Naive thymus-derived CD4-positive, alpha-beta T cell (primary cell): ENCODE measurements at regions of chr7 and their contacts with region 1.

Region 1: DNA sequence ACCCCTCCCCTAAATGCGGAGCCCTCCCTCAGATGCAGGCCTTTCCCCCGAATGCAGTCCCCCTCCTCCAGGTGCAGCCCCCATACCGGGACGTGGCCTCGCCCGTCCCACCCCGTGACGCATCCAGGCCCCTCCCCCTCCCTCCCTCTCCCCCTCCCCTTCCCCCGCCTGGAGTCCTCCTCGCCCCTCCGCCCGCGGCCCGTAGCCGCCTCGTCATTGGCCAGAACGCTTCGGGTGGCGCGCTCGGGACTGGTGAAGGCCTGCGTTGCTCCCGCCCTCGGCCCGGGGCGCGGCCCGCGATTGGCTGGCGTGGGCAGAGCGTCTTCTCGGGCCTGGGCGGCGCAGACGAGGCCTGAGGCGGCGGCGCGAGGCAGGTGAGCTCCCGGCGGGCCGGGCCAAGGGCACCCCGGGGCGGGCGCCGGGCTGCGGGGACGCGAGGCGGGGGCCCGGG is 16.0 kb upstream of the SUN1 start:
- DNase-seq: peak; percentile 95 to 98 (median 97)
- ATAC-seq: peak; percentile 98
- H3K4me3 ChIP-seq: peak overlapping the region; percentile 52
- H3K4me3 Mint-ChIP-seq: peak overlapping the region; percentile 60 to 98 (median 88)
- H3K27ac ChIP-seq: peak overlapping the region; percentile 59
- H3K27ac Mint-ChIP-seq: peak overlapping the region in 3 of 9 donors; percentile 9 to 85 (median 65)
- H3K4me1 ChIP-seq: peaks cover 27 to 32% of the 10 kb centered on the region in 2 donors
- H3K4me1 Mint-ChIP-seq: peaks cover 45 to 72% (median 61%) of the 10 kb centered on the region in 7 donors
- H3K27me3 ChIP-seq: no peaks in the 10 kb centered on the region
- H3K27me3 Mint-ChIP-seq: peaks cover 0 to 42% (median 0%) of the 10 kb centered on the region in 5 donors

Region 2: DNA sequence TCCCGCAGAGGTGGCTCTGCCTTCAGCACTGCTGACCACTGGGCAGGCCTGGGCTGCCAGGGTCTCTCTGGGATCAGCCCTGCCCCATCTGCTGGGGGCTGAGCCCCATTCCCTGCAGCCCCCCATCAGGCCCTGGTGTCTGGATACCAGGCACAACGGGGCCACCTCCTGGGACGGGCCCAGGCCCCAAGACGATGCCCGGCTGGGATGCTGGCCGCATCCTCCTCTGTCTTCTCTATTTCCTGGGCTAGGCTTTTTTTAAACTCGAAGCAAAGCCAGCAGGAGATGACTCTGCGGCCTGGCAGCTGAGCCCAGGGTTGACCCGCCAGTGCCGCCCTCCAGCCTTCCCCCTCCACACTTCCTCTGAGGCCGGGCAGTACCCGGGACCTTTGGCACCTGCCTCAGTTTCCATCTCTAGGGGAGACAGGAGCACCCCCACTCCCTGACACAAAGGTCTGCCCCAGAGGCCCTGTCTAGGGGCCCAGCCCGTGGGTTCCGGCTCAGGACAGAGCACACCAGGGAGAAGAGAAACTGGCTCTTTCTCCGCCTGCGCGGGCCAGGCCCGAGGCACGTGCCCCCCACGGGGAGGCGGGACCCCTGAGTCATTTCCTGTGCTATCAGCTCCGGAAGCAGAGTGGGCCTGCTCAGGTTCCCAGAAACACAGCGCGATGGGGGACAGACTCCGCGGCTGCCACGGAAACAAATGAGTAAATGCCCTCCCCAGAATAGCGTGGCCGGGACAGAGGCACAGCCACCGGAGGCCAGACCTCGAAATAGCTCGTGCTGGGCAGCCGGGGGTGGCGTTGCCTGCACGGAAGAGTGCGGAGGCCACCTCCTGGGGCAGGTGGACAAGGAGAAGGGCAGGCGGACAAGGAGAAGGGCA is 212.1 kb before region 1 on chr7:
- CTCF ChIA-PET with region 1: no interaction called
- POLR2A ChIA-PET with region 1: no interaction called
- intact Hi-C with region 1: loop called in 1 of 2 experiments (anchors 5 kb)
- DNase-seq: peak; percentile 74 to 91 (median 87)
- ATAC-seq: peak; percentile 89
- H3K4me3 ChIP-seq: peak overlapping the region; percentile 26
- H3K4me3 Mint-ChIP-seq: peak overlapping the region; percentile 77 to 98 (median 88)
- H3K27ac ChIP-seq: peak overlapping the region; percentile 86
- H3K27ac Mint-ChIP-seq: peak overlapping the region; percentile 93 to 100 (median 99)
- H3K4me1 ChIP-seq: peaks cover 48 to 56% of the 10 kb centered on the region in 2 donors
- H3K4me1 Mint-ChIP-seq: peaks cover 37 to 72% (median 49%) of the 10 kb centered on the region in 7 donors
- H3K27me3 ChIP-seq: no peaks in the 10 kb centered on the region
- H3K27me3 Mint-ChIP-seq: no peaks in the 10 kb centered on the region

Region 3: DNA sequence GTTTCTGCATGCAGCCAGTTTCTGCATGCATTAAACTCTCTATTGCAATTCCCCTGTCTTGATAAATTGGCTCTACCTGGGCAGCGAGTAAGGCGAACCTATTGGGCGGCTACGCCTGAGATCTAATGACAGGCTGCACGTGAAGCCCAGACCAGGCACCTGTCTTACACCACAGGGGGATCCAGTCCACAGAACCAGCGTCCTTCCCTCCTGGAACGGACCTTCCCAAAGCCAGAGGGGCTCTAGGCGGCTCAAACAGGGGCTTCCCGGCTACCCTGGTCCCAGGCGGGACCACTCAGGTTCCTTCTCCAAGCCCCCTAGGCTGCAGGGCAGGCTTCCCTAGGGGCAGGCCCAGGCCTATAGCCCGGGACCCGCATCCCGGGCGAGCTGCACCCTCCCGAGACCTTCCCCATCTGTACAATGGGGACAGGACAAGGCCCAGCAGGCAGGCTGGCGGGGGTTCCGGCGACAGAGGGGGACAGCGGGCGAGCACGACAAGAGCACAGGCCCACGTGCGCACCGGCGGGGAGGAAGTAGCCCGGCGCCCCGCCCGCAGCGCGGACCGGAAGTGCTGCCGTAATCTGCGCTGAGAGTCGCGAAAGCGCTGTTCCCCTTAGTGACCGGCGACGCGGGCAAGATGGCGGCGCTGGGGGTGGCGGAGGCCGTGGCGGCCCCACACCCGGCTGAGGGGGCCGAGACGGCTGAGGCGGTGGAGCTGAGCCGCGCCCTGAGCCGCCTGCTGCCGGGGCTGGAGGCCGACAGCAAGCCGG is 90.1 kb before region 1 on chr7 and contains the start of gene DNAAF5:
- CTCF ChIA-PET with region 1: no interaction called
- POLR2A ChIA-PET with region 1: no interaction called
- intact Hi-C with region 1: loop called (anchors 1 to 2 kb)
- DNase-seq: peak; percentile 73 to 90 (median 84)
- ATAC-seq: peak; percentile 97
- H3K4me3 ChIP-seq: peak within 1 kb of the TSS; percentile 81
- H3K4me3 Mint-ChIP-seq: peak within 1 kb of the TSS; percentile 72 to 88 (median 84)
- H3K27ac ChIP-seq: peak within 1 kb of the TSS; percentile 73
- H3K27ac Mint-ChIP-seq: peak within 1 kb of the TSS in 8 of 9 donors; percentile 57 to 83 (median 71)
- H3K4me1 ChIP-seq: peaks cover 14 to 15% of the 10 kb centered on the region in 2 donors
- H3K4me1 Mint-ChIP-seq: peaks cover 20 to 37% (median 21%) of the 10 kb centered on the region in 7 donors
- H3K27me3 ChIP-seq: no peaks in the 10 kb centered on the region
- H3K27me3 Mint-ChIP-seq: no peaks in the 10 kb centered on the region
- total RNA-seq, gene DNAAF5: 12.5 to 25.7 (median 14.6) TPM

Region 4: DNA sequence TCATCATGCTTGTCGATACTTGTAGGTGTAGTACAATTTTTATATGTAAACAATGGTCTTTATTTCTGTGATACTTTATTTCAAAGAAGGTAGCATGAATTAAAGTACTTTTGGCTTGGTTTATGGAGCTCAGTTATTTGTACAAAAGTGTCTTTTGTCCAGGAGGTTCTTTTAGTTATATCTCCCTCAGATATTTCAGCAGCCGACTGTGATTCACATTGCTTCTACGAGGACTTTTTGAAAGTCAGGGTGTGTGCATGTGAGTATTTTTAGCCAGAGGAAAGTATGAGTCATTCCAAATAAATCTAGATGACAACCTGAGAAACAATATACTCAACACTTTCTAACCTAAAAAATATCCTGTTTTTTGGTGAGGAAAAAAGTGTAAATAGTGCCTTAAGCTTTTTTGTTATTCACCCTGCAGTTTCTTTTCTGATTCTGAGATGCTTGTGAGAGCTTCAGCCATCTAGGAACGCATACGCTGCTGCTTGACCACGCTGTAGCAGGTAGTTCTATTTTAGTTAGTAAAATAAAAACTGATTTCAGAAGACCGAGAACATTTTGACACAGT is 15.4 kb after region 1 on chr7:
- CTCF ChIA-PET with region 1: interaction called, 5 read pairs
- POLR2A ChIA-PET with region 1: interaction called, 36 read pairs
- intact Hi-C with region 1: loop called (anchors 1 kb)
- DNase-seq: peak in 3 of 9 donors; percentile 19 to 49 (median 26)
- ATAC-seq: peak; percentile 13
- H3K4me3 ChIP-seq: peak overlapping the region; percentile 12
- H3K4me3 Mint-ChIP-seq: peak overlapping the region; percentile 64 to 89 (median 84)
- H3K27ac ChIP-seq: peak overlapping the region; percentile 83
- H3K27ac Mint-ChIP-seq: peak overlapping the region; percentile 86 to 98 (median 94)
- H3K4me1 ChIP-seq: peaks cover 23 to 36% of the 10 kb centered on the region in 2 donors
- H3K4me1 Mint-ChIP-seq: peaks cover 38 to 67% (median 57%) of the 10 kb centered on the region in 7 donors
- H3K27me3 ChIP-seq: no peaks in the 10 kb centered on the region
- H3K27me3 Mint-ChIP-seq: no peaks in the 10 kb centered on the region

Region 5: GRCh38 chr7:855686-856369 is 39.5 kb after region 1 on chr7:
- CTCF ChIA-PET with region 1: no interaction called
- POLR2A ChIA-PET with region 1: no interaction called
- intact Hi-C with region 1: no loop called
- DNase-seq: no peak
- ATAC-seq: no peak
- H3K4me3 ChIP-seq: no peak overlapping the region
- H3K4me3 Mint-ChIP-seq: no peak overlapping the region
- H3K27ac ChIP-seq: no peak overlapping the region
- H3K27ac Mint-ChIP-seq: peak overlapping the region in 1 of 9 donors; percentile 57
- H3K4me1 ChIP-seq: no peaks in the 10 kb centered on the region
- H3K4me1 Mint-ChIP-seq: peaks cover 0 to 4% (median 0%) of the 10 kb centered on the region in 7 donors
- H3K27me3 ChIP-seq: no peaks in the 10 kb centered on the region
- H3K27me3 Mint-ChIP-seq: no peaks in the 10 kb centered on the region

Region 6: DNA sequence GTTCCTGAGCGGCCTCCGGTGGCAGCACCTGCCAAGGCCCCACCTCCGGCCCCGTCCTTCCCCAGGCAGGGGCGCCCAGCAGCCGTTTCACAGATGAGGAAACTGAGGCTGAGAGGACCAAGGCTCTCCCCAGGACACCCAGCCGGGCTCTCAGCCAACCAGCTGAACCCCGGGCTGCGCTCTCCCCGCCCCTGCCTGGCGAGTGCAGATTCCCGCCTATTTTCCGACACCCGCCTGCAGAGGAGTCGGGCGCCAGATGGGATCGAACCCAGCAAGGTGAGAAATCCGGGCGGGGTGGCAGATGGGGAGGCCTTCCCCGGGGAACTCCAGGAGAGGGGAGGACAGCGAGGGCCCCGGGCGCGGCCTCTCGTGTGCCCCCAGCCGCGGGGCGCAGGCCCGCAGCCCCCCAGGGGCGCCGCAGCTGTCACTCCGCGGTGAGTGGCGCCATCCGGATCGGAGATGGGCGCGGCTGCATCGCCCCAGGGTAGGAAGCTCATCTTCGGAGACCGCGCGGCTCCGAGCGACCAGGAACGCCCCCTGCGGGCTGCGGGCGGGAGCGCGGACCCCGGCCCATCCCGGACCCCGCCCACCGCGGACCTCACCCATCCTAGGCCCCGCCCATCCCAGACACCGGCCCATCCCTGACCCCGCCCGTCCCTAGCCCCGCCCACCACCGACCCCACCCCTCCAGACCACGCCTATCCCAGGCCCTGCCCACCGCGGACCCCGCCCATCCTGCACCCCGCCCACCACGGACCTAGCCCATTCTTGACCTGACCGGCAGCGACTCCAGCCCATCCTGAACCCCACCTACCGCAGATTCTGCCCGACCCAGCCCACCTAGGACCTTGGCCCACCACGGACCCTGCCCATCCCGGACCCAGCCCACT is 552.6 kb after region 1 on chr7:
- CTCF ChIA-PET with region 1: no interaction called
- POLR2A ChIA-PET with region 1: no interaction called
- intact Hi-C with region 1: no loop called
- DNase-seq: peak in 2 of 9 donors; percentile 3 to 42
- ATAC-seq: peak; percentile 45
- H3K4me3 ChIP-seq: no peak overlapping the region
- H3K4me3 Mint-ChIP-seq: peak overlapping the region in 5 of 10 donors; percentile 12 to 43 (median 14)
- H3K27ac ChIP-seq: no peak overlapping the region
- H3K27ac Mint-ChIP-seq: no peak overlapping the region
- H3K4me1 ChIP-seq: no peaks in the 10 kb centered on the region
- H3K4me1 Mint-ChIP-seq: peaks cover 0 to 5% (median 0%) of the 10 kb centered on the region in 7 donors
- H3K27me3 ChIP-seq: no peaks in the 10 kb centered on the region
- H3K27me3 Mint-ChIP-seq: peaks cover 33 to 68% (median 39%) of the 10 kb centered on the region in 5 donors

Region 7: DNA sequence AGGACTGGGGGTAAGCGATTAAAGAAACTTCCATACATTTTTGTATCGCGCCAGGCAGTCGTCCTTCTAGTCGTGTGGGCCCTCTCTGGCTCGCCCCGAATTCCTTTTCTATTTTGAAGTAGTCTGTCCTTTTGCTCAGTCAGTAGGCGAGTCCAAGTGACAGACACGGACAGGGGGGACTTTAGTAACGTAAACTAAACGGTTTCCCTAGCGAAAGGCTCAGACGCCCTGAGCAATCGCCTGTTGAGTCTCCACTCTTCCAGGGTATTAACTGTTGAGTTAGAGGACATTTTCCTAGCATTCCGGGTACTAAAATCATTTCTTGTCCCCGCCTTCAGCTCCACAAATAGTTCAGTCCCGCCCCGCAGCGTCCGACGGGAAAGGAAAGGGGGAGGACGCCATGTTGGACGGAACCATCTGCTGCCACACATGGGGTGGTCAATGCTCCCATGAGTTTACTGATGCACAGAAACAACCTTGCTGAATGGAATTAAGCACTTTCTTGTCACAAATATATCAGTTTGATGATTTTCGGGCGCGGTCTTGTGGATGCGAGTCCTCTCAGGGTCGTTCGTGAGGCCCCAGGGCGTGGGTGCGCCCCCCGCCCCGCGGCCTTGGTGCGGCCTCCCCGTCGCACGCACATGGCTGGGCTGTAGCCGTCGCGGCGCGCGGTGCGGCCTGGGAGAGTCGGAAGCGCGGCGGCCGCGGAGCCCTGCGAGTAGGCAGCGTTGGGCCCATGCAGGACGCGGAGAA is 1538.0 kb after region 1 on chr7 and contains the start of gene EIF3B:
- CTCF ChIA-PET with region 1: no interaction called
- POLR2A ChIA-PET with region 1: no interaction called
- intact Hi-C with region 1: loop called in 1 of 2 experiments (anchors 10 kb)
- DNase-seq: peak; percentile 87 to 97 (median 94)
- ATAC-seq: peak; percentile 90
- H3K4me3 ChIP-seq: peak within 1 kb of the TSS; percentile 89
- H3K4me3 Mint-ChIP-seq: peak within 1 kb of the TSS; percentile 90 to 100 (median 94)
- H3K27ac ChIP-seq: peak within 1 kb of the TSS; percentile 97
- H3K27ac Mint-ChIP-seq: peak within 1 kb of the TSS; percentile 98 to 100 (median 100)
- H3K4me1 ChIP-seq: peaks cover 25 to 38% of the 10 kb centered on the region in 2 donors
- H3K4me1 Mint-ChIP-seq: peaks cover 16 to 48% (median 31%) of the 10 kb centered on the region in 7 donors
- H3K27me3 ChIP-seq: no peaks in the 10 kb centered on the region
- H3K27me3 Mint-ChIP-seq: peaks cover 0 to 3% (median 0%) of the 10 kb centered on the region in 5 donors
- total RNA-seq, gene EIF3B: 127 to 189 (median 158) TPM